MCF 10A (cell line): ENCODE measurements at regions of chr9 and their contacts with region 1.

Region 1: DNA sequence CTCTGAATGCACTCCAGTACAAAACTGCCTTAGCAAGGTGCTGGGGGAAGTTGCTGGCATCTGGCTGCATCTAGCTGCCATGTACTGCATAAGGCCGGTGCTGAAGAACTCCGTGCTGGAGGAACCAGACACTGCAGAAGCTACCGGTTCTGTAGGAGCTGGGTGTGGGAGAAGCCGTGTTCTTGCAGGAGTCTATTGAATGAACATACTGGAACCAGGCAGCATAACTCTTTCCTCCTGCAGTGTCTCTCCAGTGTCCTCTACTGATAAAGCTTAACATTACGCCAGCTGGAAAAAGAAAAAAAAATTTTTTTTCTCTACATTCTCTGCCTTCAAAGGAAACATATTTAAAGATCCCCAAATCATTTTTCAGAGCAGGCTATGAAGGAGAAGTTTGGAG is 38.5 kb downstream of the VPS13A start:
- DNase-seq: no peak
- H3K4me3 Mint-ChIP-seq: no peak overlapping the region
- H3K27ac Mint-ChIP-seq: no peak overlapping the region
- H3K4me1 Mint-ChIP-seq: peaks cover 32% of the 10 kb centered on the region
- H3K27me3 Mint-ChIP-seq: no peaks in the 10 kb centered on the region
- CTCF ChIP-seq: no peak

Region 2: GRCh38 chr9:77072022-77072421 is 143.9 kb before region 1 on chr9:
- CTCF ChIA-PET with region 1: no interaction called
- POLR2A ChIA-PET with region 1: no interaction called
- intact Hi-C with region 1: no loop called
- DNase-seq: no peak
- H3K4me3 Mint-ChIP-seq: no peak overlapping the region
- H3K27ac Mint-ChIP-seq: no peak overlapping the region
- H3K4me1 Mint-ChIP-seq: no peaks in the 10 kb centered on the region
- H3K27me3 Mint-ChIP-seq: peaks cover 2% of the 10 kb centered on the region
- CTCF ChIP-seq: no peak

Region 3: DNA sequence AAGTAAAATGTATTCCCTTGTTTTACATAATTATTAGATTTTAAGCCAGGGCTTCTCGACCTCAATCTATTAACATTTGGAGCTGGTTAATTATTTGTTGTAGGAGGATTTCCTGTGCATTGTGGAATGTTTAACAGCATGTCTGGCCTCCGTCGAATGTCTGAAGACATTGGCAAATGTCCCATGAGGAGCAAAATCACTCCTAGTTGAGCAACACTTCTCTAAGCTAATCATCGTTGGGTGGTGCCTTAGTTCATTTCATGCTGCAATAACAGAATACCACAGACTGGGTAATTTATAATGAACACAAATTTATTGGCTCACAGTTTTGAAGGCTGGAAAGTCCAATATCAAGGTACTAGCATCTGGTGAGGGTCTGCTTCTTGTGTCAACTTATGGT is 52.0 kb before region 1 on chr9:
- CTCF ChIA-PET with region 1: interaction called, 46 read pairs
- POLR2A ChIA-PET with region 1: interaction called, 13 read pairs
- intact Hi-C with region 1: no loop called
- DNase-seq: peak; percentile 81
- H3K4me3 Mint-ChIP-seq: peak overlapping the region; percentile 46
- H3K27ac Mint-ChIP-seq: peak overlapping the region; percentile 84
- H3K4me1 Mint-ChIP-seq: peaks cover 39% of the 10 kb centered on the region
- H3K27me3 Mint-ChIP-seq: no peaks in the 10 kb centered on the region
- CTCF ChIP-seq: no peak

Region 4: DNA sequence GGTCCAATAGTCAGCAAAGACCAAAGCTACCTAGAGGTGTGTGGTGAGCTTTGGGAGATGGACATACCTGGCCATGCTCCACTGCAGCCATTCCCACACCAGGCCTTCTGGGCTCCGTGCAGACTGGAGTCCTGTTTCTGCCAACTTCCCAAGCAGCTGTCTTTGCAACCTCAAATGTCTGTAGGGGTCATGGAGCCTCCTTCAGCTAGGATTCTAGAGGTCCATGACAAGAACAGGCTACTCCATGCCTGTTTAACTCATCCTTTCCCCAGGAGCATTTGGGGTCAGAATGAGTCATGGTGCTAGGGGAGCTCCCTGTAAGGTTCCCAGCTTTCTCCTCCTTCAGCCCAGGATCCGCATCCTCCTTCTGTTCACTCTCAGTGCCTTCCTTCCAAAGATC is 21.5 kb before region 1 on chr9:
- CTCF ChIA-PET with region 1: interaction called, 10 read pairs
- POLR2A ChIA-PET with region 1: no interaction called
- intact Hi-C with region 1: no loop called
- DNase-seq: no peak
- H3K4me3 Mint-ChIP-seq: no peak overlapping the region
- H3K27ac Mint-ChIP-seq: no peak overlapping the region
- H3K4me1 Mint-ChIP-seq: peaks cover 11% of the 10 kb centered on the region
- H3K27me3 Mint-ChIP-seq: no peaks in the 10 kb centered on the region
- CTCF ChIP-seq: no peak